Activated B cell treated with CpG ODN at 0.5 μM for 24 hours (primary cell): ENCODE measurements at regions of chr1 and their contacts with region 1.

Region 1: GRCh38 chr1:211680752-211681327 is 5.4 kb upstream of the NEK2 start:
- DNase-seq: peak; percentile 48
- ATAC-seq: peak; percentile 90
- H3K4me3 Mint-ChIP-seq: peak overlapping the region; percentile 26
- H3K27ac Mint-ChIP-seq: peak overlapping the region; percentile 85
- H3K4me1 Mint-ChIP-seq: peaks cover 41% of the 10 kb centered on the region
- H3K27me3 Mint-ChIP-seq: no peaks in the 10 kb centered on the region
- CTCF ChIP-seq: no peak

Region 2: GRCh38 chr1:211643324-211644212 is 37.3 kb before region 1 on chr1:
- CTCF ChIA-PET with region 1: no interaction called
- POLR2A ChIA-PET with region 1: no interaction called
- intact Hi-C with region 1: no loop called
- DNase-seq: no peak
- ATAC-seq: no peak
- H3K4me3 Mint-ChIP-seq: no peak overlapping the region
- H3K27ac Mint-ChIP-seq: no peak overlapping the region
- H3K4me1 Mint-ChIP-seq: no peaks in the 10 kb centered on the region
- H3K27me3 Mint-ChIP-seq: peaks cover 12% of the 10 kb centered on the region
- CTCF ChIP-seq: no peak

Region 3: DNA sequence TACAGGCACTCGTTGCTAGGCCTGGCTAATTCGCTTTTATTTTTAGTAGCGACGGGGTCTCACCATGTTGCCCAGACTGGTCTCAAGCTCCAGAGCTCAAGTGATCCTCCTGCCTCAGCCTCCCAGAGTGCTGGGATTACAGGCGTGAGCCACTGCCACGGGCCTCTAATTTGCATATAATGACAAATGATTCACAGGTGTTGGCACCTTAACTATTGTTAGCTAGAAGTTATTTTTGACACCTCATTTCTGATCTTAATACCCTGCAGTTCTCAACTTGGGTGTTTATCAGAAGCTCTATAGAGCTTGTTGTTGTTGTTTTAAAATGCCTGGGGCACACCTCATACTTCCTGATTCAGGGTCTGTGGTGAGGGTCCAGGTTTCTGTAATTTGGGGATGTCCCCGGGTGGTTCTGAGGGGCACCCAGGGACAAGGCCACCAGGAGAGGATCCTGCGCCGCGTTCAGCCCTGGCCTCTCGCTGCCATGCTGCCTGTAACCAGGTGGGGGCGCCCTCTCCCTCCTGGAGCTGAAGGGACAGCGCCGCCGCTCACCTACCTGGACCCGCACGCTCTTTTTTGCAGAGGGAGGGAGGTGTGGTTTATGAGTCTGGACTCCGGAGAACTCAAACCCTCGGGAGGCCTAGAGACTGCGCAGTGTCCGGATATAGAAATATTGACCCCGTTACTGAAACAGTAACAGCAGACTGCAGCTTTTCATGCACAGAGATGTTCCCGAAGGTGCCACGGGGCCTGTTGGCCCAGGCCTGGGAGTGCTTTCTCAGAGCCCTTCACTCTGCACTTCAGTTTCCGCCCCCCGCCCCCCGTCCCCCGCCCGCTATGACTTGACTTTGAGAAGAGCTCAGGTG is 17.6 kb after region 1 on chr1:
- CTCF ChIA-PET with region 1: interaction called, 29 read pairs
- POLR2A ChIA-PET with region 1: interaction called, 16 read pairs
- intact Hi-C with region 1: loop called (anchors 1 kb)
- DNase-seq: peak; percentile 59
- ATAC-seq: peak; percentile 40
- H3K4me3 Mint-ChIP-seq: peak overlapping the region; percentile 68
- H3K27ac Mint-ChIP-seq: no peak overlapping the region
- H3K4me1 Mint-ChIP-seq: peaks cover 57% of the 10 kb centered on the region
- H3K27me3 Mint-ChIP-seq: peaks cover 3% of the 10 kb centered on the region
- CTCF ChIP-seq: peak; percentile 22

Region 4: DNA sequence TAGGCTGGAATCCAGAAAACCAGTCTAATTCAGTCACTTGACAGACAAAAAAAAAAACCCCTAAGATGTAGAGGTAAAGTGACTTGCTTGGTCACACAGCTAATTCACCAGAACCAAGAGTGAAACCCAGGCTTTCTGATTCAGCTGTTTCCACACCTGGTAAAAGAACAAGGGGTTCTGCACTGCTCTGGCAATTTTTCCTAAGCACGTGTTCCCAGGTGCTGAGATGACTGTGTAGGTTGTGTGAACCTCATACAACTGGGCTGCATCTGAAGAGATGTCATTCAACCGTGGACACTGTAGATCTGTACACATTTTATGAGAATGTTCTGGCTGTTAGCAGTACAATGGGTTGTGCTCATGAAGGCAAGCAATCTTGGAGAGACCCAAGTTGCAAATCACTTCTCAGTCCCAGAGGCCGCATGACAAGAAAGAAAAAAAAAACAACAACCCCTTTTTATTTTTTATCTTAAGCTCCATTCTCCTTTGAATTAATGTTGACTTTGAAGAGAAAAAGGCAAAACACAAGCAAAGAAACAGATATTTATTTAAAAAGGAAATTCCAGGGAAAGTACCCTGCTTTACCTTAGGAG is 259.1 kb after region 1 on chr1:
- CTCF ChIA-PET with region 1: no interaction called
- POLR2A ChIA-PET with region 1: no interaction called
- intact Hi-C with region 1: loop called (anchors 5 kb)
- DNase-seq: no peak
- ATAC-seq: peak; percentile 55
- H3K4me3 Mint-ChIP-seq: peak overlapping the region; percentile 11
- H3K27ac Mint-ChIP-seq: peak overlapping the region; percentile 56
- H3K4me1 Mint-ChIP-seq: peaks cover 43% of the 10 kb centered on the region
- H3K27me3 Mint-ChIP-seq: no peaks in the 10 kb centered on the region
- CTCF ChIP-seq: no peak

Region 5: DNA sequence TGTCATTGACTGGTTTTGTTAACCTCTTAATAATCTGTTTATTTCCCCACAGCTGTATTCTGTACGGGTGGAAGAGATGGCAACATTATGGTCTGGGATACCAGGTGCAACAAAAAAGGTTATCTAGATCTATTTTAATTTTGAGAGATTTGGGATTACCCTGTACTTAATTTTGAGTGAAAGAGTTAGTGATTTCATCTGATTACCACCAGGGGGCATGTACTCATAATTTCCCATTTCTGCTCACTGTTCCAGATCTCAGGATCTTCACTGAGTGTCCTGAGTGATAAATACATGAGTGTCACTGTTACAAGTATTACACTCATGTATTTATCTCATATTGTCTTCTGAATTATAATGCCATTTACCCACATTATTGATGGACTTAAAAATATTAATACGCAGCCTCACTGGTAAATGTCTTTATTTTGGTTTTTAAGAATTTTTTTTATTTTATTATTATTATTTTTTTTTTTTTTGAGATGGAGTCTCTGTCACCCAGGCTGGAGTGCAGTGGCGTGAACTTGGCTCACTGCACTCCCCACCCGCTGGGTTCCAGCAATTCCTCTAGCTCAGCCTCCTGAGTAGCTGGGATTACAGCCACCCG is 382.1 kb after region 1 on chr1:
- CTCF ChIA-PET with region 1: interaction called, 20 read pairs
- POLR2A ChIA-PET with region 1: no interaction called
- intact Hi-C with region 1: loop called (anchors 1 kb)
- DNase-seq: no peak
- ATAC-seq: peak; percentile 37
- H3K4me3 Mint-ChIP-seq: no peak overlapping the region
- H3K27ac Mint-ChIP-seq: no peak overlapping the region
- H3K4me1 Mint-ChIP-seq: no peaks in the 10 kb centered on the region
- H3K27me3 Mint-ChIP-seq: no peaks in the 10 kb centered on the region
- CTCF ChIP-seq: peak; percentile 36

Region 6: DNA sequence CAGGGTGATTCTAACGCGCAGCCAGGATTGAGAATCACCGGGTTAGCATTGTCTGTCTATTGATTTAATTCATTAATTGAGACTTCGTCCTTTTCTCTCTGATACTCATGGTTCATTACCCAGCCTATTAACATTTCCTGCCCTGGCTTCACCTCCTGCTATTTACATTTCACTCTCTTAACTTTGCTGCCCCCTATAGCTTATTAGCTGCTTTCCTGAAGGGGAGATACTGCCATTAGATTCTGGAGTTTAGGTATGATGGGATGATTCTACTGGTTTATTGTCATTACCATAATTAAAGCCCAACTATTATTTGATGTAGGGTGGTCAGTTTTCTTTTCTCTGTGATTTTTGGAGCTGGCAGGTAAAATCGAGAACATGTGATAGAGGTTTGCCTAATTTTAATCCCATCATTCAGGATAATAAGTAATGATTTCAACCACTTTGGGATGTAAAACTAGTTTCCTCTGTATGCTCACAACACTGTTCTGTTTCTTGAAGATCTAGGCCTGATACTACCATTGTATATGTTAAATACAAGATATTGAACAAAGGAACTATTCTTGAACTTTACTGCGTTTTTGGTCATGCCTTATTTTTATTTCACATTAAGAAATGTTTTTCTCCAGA is 610.8 kb after region 1 on chr1:
- CTCF ChIA-PET with region 1: interaction called, 7 read pairs
- POLR2A ChIA-PET with region 1: interaction called, 5 read pairs
- intact Hi-C with region 1: loop called (anchors 1 kb)
- DNase-seq: no peak
- ATAC-seq: peak; percentile 91
- H3K4me3 Mint-ChIP-seq: peak overlapping the region; percentile 2
- H3K27ac Mint-ChIP-seq: no peak overlapping the region
- H3K4me1 Mint-ChIP-seq: peaks cover 78% of the 10 kb centered on the region
- H3K27me3 Mint-ChIP-seq: no peaks in the 10 kb centered on the region
- CTCF ChIP-seq: peak; percentile 44

Region 7: GRCh38 chr1:212414328-212415106 is 733.7 kb after region 1 on chr1 and contains the start of gene PACC1:
- CTCF ChIA-PET with region 1: no interaction called
- POLR2A ChIA-PET with region 1: interaction called, 4 read pairs
- intact Hi-C with region 1: loop called (anchors 2 kb)
- DNase-seq: peak; percentile 93
- ATAC-seq: peak; percentile 98
- H3K4me3 Mint-ChIP-seq: peak within 1 kb of the TSS; percentile 100
- H3K27ac Mint-ChIP-seq: peak within 1 kb of the TSS; percentile 96
- H3K4me1 Mint-ChIP-seq: peaks cover 43% of the 10 kb centered on the region
- H3K27me3 Mint-ChIP-seq: no peaks in the 10 kb centered on the region
- CTCF ChIP-seq: no peak
- total RNA-seq, gene PACC1: 15.2 and 20.0 TPM in 2 replicates